ENCODE measurements at regions of chr22 and their contacts with region 1.

Region 1: DNA sequence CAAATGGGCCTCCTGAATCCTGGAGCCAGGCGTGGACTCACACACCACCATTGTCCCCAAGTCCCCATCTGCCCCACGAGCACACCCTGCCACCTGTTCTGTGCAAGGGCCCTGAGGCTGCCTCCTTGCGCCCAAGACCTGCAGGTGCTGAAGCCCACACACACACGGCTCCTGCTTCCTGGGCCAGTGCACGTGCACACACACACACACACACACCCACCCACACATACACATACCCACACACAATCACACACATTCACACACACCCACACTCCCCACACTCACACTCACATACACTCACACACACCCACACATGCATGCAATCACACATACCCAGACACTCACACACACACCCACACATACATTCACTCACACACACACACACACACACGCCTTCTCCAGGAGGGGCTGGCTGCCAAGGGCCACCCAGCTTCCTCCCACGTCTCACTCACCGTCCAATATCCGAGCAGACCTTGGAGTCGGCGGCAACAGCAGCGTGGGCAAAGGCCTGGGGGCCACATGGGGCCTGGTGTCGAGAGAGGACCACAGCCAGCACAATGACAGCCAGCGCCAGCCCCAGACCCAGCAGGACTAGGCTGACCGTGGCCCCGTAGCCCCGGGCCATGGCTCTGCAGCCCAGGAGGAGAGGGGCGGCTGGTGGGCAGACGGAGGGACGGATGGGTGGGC is 638 bp downstream of the GGT5 start:
- ATAC-seq: peak in 2 of 8 experiments; percentile 4 to 32
- H3K4me3 ChIP-seq: no peak overlapping the region
- H3K27ac ChIP-seq: no peak overlapping the region
- H3K4me1 ChIP-seq: peaks cover 0 to 16% of the 10 kb centered on the region in 2 donors

Region 2: GRCh38 chr22:24189249-24190158 is 54.7 kb before region 1 on chr22:
- in situ Hi-C with region 1: loop called in 1 of 9 experiments (anchors 10 kb)
- ATAC-seq: peak; percentile 69 to 96 (median 80)
- H3K4me3 ChIP-seq: no peak overlapping the region
- H3K27ac ChIP-seq: no peak overlapping the region
- H3K4me1 ChIP-seq: no peaks in the 10 kb centered on the region

Region 3: GRCh38 chr22:24503137-24503842 is 259.0 kb after region 1 on chr22:
- in situ Hi-C with region 1: no loop called
- ATAC-seq: peak in 3 of 8 experiments; percentile 78 to 86 (median 81)
- H3K4me3 ChIP-seq: no peak overlapping the region
- H3K27ac ChIP-seq: no peak overlapping the region
- H3K4me1 ChIP-seq: peaks cover 23 to 37% of the 10 kb centered on the region in 2 donors

Region 4: DNA sequence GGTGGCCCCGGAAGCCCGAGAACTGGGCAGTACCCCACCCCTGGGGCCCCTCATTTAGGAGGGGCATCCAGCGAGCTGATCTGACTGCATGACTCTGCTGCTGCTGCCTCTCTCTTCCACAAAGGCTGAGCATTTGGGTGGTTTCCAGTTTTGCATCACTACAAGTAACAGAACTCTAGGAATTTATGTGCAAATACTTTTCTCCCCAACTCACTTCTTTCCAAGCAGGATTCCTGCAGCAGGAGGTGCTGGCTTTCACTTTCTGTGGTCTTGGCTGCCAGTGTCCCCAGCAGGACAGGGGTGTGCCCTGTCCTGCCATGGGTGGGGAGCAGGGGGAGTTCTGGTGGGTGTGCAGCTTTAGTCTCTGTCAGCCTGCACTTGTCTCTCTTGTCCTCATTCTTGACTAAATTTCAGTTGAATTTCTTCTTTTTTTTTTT is 272.1 kb after region 1 on chr22:
- in situ Hi-C with region 1: no loop called
- ATAC-seq: peak in 5 of 8 experiments; percentile 40 to 93 (median 88)
- H3K4me3 ChIP-seq: no peak overlapping the region
- H3K27ac ChIP-seq: no peak overlapping the region
- H3K4me1 ChIP-seq: peaks cover 5 to 6% of the 10 kb centered on the region in 2 donors

Measured in motor neuron (in vitro differentiated cells).